Caco-2 (cell line): ENCODE measurements at regions of chr11 and their contacts with region 1.

Region 1: GRCh38 chr11:125091247-125091876 is 20.1 kb downstream of the TMEM218 start:
- DNase-seq: peak; percentile 71 to 75
- H3K4me3 ChIP-seq: no peak overlapping the region
- H3K4me3 Mint-ChIP-seq: no peak overlapping the region
- H3K27ac Mint-ChIP-seq: peak overlapping the region; percentile 48
- H3K4me1 ChIP-seq: peaks cover 29% of the 10 kb centered on the region
- H3K4me1 Mint-ChIP-seq: peaks cover 30% of the 10 kb centered on the region
- H3K27me3 ChIP-seq: no peaks in the 10 kb centered on the region
- H3K27me3 Mint-ChIP-seq: no peaks in the 10 kb centered on the region
- CTCF ChIP-seq: peak; percentile 87 to 89

Region 2: GRCh38 chr11:125075849-125076317 is 15.5 kb before region 1 on chr11:
- CTCF ChIA-PET with region 1: interaction called, 10 read pairs
- POLR2A ChIA-PET with region 1: no interaction called
- intact Hi-C with region 1: no loop called
- DNase-seq: peak in 1 of 2 experiments; percentile 31
- H3K4me3 ChIP-seq: no peak overlapping the region
- H3K4me3 Mint-ChIP-seq: no peak overlapping the region
- H3K27ac Mint-ChIP-seq: no peak overlapping the region
- H3K4me1 ChIP-seq: peaks cover 47% of the 10 kb centered on the region
- H3K4me1 Mint-ChIP-seq: peaks cover 27% of the 10 kb centered on the region
- H3K27me3 ChIP-seq: no peaks in the 10 kb centered on the region
- H3K27me3 Mint-ChIP-seq: no peaks in the 10 kb centered on the region
- CTCF ChIP-seq: no peak

Region 3: GRCh38 chr11:125102510-125102909 is 11.1 kb after region 1 on chr11:
- CTCF ChIA-PET with region 1: no interaction called
- POLR2A ChIA-PET with region 1: no interaction called
- intact Hi-C with region 1: no loop called
- DNase-seq: no peak
- H3K4me3 ChIP-seq: no peak overlapping the region
- H3K4me3 Mint-ChIP-seq: no peak overlapping the region
- H3K27ac Mint-ChIP-seq: no peak overlapping the region
- H3K4me1 ChIP-seq: no peaks in the 10 kb centered on the region
- H3K4me1 Mint-ChIP-seq: peaks cover 7% of the 10 kb centered on the region
- H3K27me3 ChIP-seq: no peaks in the 10 kb centered on the region
- H3K27me3 Mint-ChIP-seq: no peaks in the 10 kb centered on the region
- CTCF ChIP-seq: no peak

Region 4: GRCh38 chr11:125123947-125124617 is 32.7 kb after region 1 on chr11:
- CTCF ChIA-PET with region 1: interaction called, 66 read pairs
- POLR2A ChIA-PET with region 1: no interaction called
- intact Hi-C with region 1: loop called (anchors 1 kb)
- DNase-seq: peak; percentile 74 to 77
- H3K4me3 ChIP-seq: peak overlapping the region; percentile 5
- H3K4me3 Mint-ChIP-seq: peak overlapping the region; percentile 55
- H3K27ac Mint-ChIP-seq: peak overlapping the region; percentile 76
- H3K4me1 ChIP-seq: peaks cover 28% of the 10 kb centered on the region
- H3K4me1 Mint-ChIP-seq: peaks cover 32% of the 10 kb centered on the region
- H3K27me3 ChIP-seq: no peaks in the 10 kb centered on the region
- H3K27me3 Mint-ChIP-seq: peaks cover 5% of the 10 kb centered on the region
- CTCF ChIP-seq: peak; percentile 67 to 80

Region 5: GRCh38 chr11:125164422-125165110 is 73.2 kb after region 1 on chr11 and contains the start of gene PKNOX2:
- CTCF ChIA-PET with region 1: interaction called, 6 read pairs
- POLR2A ChIA-PET with region 1: no interaction called
- intact Hi-C with region 1: loop called (anchors 2 kb)
- DNase-seq: peak; percentile 71 to 89
- H3K4me3 ChIP-seq: peak within 1 kb of the TSS; percentile 65
- H3K4me3 Mint-ChIP-seq: peak within 1 kb of the TSS; percentile 76
- H3K27ac Mint-ChIP-seq: no peak within 1 kb of the TSS
- H3K4me1 ChIP-seq: peaks cover 5% of the 10 kb centered on the region
- H3K4me1 Mint-ChIP-seq: peaks cover 8% of the 10 kb centered on the region
- H3K27me3 ChIP-seq: peaks cover 11% of the 10 kb centered on the region
- H3K27me3 Mint-ChIP-seq: peaks cover 27% of the 10 kb centered on the region
- CTCF ChIP-seq: peak; percentile 67 to 95
- total RNA-seq, gene PKNOX2: not detected in 2 replicates

Region 6: DNA sequence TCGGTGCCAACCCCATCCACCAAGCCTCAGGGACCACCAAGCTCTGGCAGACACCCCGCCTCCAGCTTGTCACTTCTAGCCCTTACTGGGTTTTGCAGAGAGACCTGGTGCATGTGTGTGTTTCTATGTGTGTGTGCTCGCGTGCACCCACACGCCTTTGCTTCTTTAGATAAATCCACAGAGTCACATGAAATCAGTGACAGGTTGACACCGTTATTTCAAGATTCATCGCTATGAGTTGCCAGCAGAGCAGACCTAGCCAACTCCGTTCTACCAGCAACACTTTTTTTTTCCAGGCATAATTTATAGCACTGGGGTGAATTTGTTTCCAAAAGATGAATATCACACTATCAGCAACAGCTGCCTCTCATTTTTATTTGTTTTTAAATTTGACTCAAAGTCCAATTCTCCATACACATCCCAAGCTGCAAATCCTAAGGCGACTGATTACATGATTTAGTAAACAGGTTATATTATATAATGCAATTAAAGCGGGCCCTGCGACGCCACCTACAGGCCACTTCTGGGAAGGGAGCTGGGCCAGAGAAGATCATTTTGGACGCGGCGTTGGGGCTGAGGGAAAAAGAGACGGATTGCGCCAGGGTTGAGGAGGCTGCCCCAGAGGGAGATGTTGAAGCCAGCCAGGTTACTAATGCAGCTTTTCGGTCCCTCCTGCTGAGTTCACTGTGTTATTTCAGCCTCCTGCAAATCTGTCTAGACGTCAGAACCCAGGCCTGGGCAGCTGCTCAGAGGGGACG is 254.2 kb after region 1 on chr11:
- CTCF ChIA-PET with region 1: interaction called, 31 read pairs
- POLR2A ChIA-PET with region 1: no interaction called
- intact Hi-C with region 1: loop called (anchors 1 kb)
- DNase-seq: peak in 1 of 2 experiments; percentile 72
- H3K4me3 ChIP-seq: no peak overlapping the region
- H3K4me3 Mint-ChIP-seq: no peak overlapping the region
- H3K27ac Mint-ChIP-seq: no peak overlapping the region
- H3K4me1 ChIP-seq: no peaks in the 10 kb centered on the region
- H3K4me1 Mint-ChIP-seq: peaks cover 7% of the 10 kb centered on the region
- H3K27me3 ChIP-seq: peaks cover 3% of the 10 kb centered on the region; the same call in 1 of the 2 replicates
- H3K27me3 Mint-ChIP-seq: peaks cover 14% of the 10 kb centered on the region
- CTCF ChIP-seq: peak; percentile 90

Region 7: GRCh38 chr11:125429166-125429707 is 337.9 kb after region 1 on chr11:
- CTCF ChIA-PET with region 1: interaction called, 20 read pairs
- POLR2A ChIA-PET with region 1: no interaction called
- intact Hi-C with region 1: loop called (anchors 1 kb)
- DNase-seq: peak; percentile 76 to 78
- H3K4me3 ChIP-seq: no peak overlapping the region
- H3K4me3 Mint-ChIP-seq: no peak overlapping the region
- H3K27ac Mint-ChIP-seq: no peak overlapping the region
- H3K4me1 ChIP-seq: 0 out of 2 replicates have a peak, but pooled peaks cover 7% of the 10 kb centered on the region
- H3K4me1 Mint-ChIP-seq: no peaks in the 10 kb centered on the region
- H3K27me3 ChIP-seq: peaks cover 1% of the 10 kb centered on the region; the same call in 1 of the 2 replicates
- H3K27me3 Mint-ChIP-seq: peaks cover 24% of the 10 kb centered on the region
- CTCF ChIP-seq: peak; percentile 93 to 95